Activated B cell treated with CpG ODN at 0.5 μM for 24 hours (primary cell): ENCODE measurements at regions of chr12 and their contacts with region 1.

Region 1: DNA sequence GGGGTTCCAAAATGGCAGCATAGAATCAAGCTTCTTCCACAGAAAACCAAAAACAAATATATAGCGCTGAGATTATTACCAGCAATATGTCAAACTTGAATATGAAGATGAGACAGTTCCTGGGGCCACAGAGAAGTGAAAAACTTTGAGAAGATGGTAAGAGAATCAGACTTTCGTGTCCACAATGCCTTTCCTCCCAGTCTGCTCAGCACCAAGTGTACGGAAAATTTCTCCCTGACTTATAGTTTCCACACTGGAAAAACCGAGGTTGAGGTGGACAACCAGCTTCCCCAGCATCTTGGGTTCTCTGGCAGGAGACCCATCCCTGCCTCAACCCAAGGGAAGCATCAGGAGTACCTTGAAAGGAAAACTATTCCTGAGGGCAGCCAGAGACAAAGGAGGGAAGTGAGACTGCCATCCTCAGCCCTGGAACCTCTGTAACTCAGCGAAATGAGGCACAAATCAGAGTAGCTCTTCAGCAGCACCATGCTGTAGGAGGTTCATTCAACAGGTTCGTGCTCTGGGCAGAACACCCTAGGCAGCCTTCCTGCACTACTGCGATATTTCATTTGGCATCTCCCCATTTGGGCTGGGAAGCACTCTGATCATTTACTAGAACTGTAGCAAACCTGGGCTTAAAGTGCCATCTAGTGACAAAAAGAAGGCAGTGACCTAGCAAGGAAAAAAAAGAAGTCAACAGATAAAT is 52.4 kb upstream of the CAPRIN2 start:
- DNase-seq: no peak
- ATAC-seq: no peak
- H3K4me3 Mint-ChIP-seq: no peak overlapping the region
- H3K27ac Mint-ChIP-seq: no peak overlapping the region
- H3K4me1 Mint-ChIP-seq: no peaks in the 10 kb centered on the region
- H3K27me3 Mint-ChIP-seq: peaks cover 10% of the 10 kb centered on the region
- CTCF ChIP-seq: peak; percentile 69

Region 2: GRCh38 chr12:29073628-29074239 is 1733.4 kb before region 1 on chr12:
- CTCF ChIA-PET with region 1: no interaction called
- POLR2A ChIA-PET with region 1: no interaction called
- intact Hi-C with region 1: loop called (anchors 1 kb)
- DNase-seq: no peak
- ATAC-seq: peak; percentile 14
- H3K4me3 Mint-ChIP-seq: no peak overlapping the region
- H3K27ac Mint-ChIP-seq: no peak overlapping the region
- H3K4me1 Mint-ChIP-seq: no peaks in the 10 kb centered on the region
- H3K27me3 Mint-ChIP-seq: peaks cover 8% of the 10 kb centered on the region
- CTCF ChIP-seq: no peak

Region 3: GRCh38 chr12:29519585-29520182 is 1287.5 kb before region 1 on chr12:
- CTCF ChIA-PET with region 1: interaction called, 34 read pairs
- POLR2A ChIA-PET with region 1: no interaction called
- intact Hi-C with region 1: loop called (anchors 1 kb)
- DNase-seq: no peak
- ATAC-seq: no peak
- H3K4me3 Mint-ChIP-seq: no peak overlapping the region
- H3K27ac Mint-ChIP-seq: no peak overlapping the region
- H3K4me1 Mint-ChIP-seq: no peaks in the 10 kb centered on the region
- H3K27me3 Mint-ChIP-seq: peaks cover 11% of the 10 kb centered on the region
- CTCF ChIP-seq: peak; percentile 40

Region 4: DNA sequence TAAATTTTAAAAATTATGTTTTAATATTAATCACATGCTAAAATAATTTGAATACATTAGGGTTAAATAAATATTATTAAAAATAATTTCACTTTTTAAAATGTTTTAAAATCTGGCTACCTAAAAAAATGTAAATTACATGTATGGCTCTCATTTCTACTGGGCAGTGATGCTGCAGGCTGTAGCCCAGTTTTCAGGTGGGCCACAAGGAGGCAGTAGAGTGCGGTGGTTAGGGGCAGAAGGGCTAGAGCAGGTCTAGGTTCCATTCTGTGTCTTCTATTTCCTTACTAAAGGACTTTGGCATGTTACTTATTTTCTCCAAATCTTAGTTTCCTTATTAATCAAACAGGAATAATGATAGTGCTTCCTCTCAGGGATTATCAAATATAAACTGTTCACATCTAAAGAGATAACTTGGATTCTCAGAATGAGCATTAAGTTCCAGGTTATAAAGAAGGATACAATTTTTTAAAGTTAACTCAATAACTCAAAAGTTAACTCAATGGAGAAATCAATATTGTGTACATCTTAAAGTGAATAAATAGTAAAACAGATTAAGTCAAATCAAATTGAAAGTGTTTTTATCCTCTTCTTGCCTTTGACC is 1254.7 kb before region 1 on chr12:
- CTCF ChIA-PET with region 1: interaction called, 34 read pairs
- POLR2A ChIA-PET with region 1: no interaction called
- intact Hi-C with region 1: loop called (anchors 1 kb)
- DNase-seq: no peak
- ATAC-seq: peak; percentile 57
- H3K4me3 Mint-ChIP-seq: no peak overlapping the region
- H3K27ac Mint-ChIP-seq: no peak overlapping the region
- H3K4me1 Mint-ChIP-seq: no peaks in the 10 kb centered on the region
- H3K27me3 Mint-ChIP-seq: no peaks in the 10 kb centered on the region
- CTCF ChIP-seq: no peak

Region 5: DNA sequence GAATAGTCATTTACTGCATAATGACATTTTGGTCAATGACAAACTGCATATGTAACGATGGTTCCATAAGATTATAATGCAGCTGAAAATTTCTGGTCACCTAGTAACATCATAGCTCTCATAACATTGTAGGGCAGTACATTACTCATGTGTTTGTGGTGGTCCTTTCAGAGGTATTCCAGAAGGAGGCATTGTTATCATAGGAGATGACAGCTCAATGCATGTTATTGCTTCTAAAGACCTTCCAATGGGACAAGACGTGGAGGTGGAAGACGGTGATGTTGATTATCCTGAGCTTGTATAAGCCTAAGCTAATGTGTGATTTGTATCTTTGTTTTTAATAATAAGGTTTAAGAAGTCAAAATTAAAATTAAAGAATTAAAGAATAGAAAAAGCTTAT is 75.6 kb after region 1 on chr12:
- CTCF ChIA-PET with region 1: no interaction called
- POLR2A ChIA-PET with region 1: no interaction called
- intact Hi-C with region 1: no loop called
- DNase-seq: no peak
- ATAC-seq: no peak
- H3K4me3 Mint-ChIP-seq: no peak overlapping the region
- H3K27ac Mint-ChIP-seq: no peak overlapping the region
- H3K4me1 Mint-ChIP-seq: no peaks in the 10 kb centered on the region
- H3K27me3 Mint-ChIP-seq: peaks cover 12% of the 10 kb centered on the region
- CTCF ChIP-seq: no peak